ENCODE measurements at regions of chr6 and their contacts with region 1.

Region 1: GRCh38 chr6:133923938-133924593 is 29.0 kb upstream of the TBPL1 start:
- DNase-seq: peak; percentile 56 to 62 (median 57)
- H3K4me3 ChIP-seq: no peak overlapping the region
- H3K4me3 Mint-ChIP-seq: no peak overlapping the region
- H3K27ac ChIP-seq: no peak overlapping the region
- H3K27ac Mint-ChIP-seq: no peak overlapping the region
- H3K4me1 ChIP-seq: no peaks in the 10 kb centered on the region
- H3K4me1 Mint-ChIP-seq: no peaks in the 10 kb centered on the region
- H3K27me3 ChIP-seq: no peaks in the 10 kb centered on the region
- H3K27me3 Mint-ChIP-seq: peaks cover 15 to 21% of the 10 kb centered on the region in 2 donors

Region 2: DNA sequence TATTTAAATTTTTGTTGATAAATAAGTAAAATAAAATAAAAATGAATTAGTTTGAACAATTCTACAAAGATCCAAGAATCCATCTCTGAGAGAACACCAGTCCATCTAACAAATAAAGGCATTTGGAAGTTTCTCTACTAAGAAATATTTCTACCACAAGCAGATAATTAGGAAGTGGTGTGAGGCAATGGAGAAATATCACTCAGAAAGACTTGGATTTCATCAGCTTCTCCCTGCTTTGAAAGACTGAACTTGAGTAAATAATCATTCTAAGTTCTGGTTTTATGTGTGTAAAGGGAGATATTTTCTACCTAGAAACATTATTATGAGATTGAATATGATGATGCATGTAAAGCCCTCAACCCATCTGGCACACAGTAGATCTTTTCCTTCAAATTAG is 52.9 kb before region 1 on chr6:
- CTCF ChIA-PET with region 1: no interaction called
- POLR2A ChIA-PET with region 1: no interaction called
- intact Hi-C with region 1: no loop called
- DNase-seq: no peak
- H3K4me3 ChIP-seq: no peak overlapping the region
- H3K4me3 Mint-ChIP-seq: no peak overlapping the region
- H3K27ac ChIP-seq: no peak overlapping the region
- H3K27ac Mint-ChIP-seq: no peak overlapping the region
- H3K4me1 ChIP-seq: no peaks in the 10 kb centered on the region
- H3K4me1 Mint-ChIP-seq: no peaks in the 10 kb centered on the region
- H3K27me3 ChIP-seq: no peaks in the 10 kb centered on the region
- H3K27me3 Mint-ChIP-seq: peaks cover 9 to 22% of the 10 kb centered on the region in 2 donors

Region 3: GRCh38 chr6:133937909-133938308 is 13.8 kb after region 1 on chr6:
- CTCF ChIA-PET with region 1: interaction called, 13 read pairs
- POLR2A ChIA-PET with region 1: no interaction called
- intact Hi-C with region 1: no loop called
- DNase-seq: no peak
- H3K4me3 ChIP-seq: no peak overlapping the region
- H3K4me3 Mint-ChIP-seq: no peak overlapping the region
- H3K27ac ChIP-seq: no peak overlapping the region
- H3K27ac Mint-ChIP-seq: no peak overlapping the region
- H3K4me1 ChIP-seq: no peaks in the 10 kb centered on the region
- H3K4me1 Mint-ChIP-seq: peaks cover 0 to 4% (median 2%) of the 10 kb centered on the region in 4 donors
- H3K27me3 ChIP-seq: no peaks in the 10 kb centered on the region
- H3K27me3 Mint-ChIP-seq: peaks cover 10 to 24% of the 10 kb centered on the region in 2 donors

Region 4: DNA sequence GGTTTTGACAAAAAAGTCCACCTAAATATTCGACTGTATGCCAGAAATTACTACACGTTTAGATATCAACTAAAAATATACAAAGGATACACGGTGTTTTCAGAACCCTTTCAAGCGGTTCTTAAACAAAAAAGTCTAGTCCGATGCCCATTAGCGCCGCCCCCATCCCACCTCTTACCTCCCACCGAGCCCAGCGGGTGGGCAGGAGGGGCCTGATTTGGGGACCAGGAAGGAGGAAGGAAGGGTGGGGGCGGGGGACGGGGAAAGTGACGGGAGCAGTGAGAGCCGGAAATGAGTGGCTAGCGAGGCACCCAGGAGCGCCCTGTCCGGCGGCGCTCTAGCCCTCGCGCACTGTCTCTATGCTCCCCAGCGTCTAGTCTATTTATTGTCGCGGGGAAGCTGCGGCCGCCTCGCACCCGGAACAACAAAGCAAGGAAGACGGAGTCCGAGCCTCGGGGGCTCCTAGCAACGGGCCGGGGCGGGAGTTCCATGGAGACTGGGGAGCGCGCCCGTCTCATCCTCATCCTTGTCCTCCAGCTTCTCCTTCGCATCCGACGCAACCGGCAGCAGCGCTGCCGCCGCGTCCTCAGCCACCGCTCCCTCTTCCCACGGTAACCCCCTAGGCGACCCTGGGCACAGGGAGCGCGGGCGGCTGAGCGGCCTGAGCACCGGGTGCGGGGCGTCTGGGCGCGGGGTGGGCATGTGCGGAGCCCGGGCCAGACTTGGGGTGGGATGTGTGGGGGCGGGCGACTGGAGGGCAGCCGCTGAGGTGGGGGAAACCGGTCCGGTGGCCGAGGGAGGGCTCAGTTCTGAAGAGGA is 29.0 kb after region 1 on chr6 and contains the start of gene TBPL1:
- CTCF ChIA-PET with region 1: interaction called, 9 read pairs
- POLR2A ChIA-PET with region 1: interaction called, 8 read pairs
- intact Hi-C with region 1: loop called (anchors 1 kb)
- DNase-seq: peak; percentile 83 to 92 (median 84)
- H3K4me3 ChIP-seq: peak within 1 kb of the TSS; percentile 85 to 97
- H3K4me3 Mint-ChIP-seq: peak within 1 kb of the TSS; percentile 89 to 99 (median 97)
- H3K27ac ChIP-seq: peak within 1 kb of the TSS; percentile 65
- H3K27ac Mint-ChIP-seq: peak within 1 kb of the TSS; percentile 92 to 98 (median 96)
- H3K4me1 ChIP-seq: peaks cover 50% of the 10 kb centered on the region
- H3K4me1 Mint-ChIP-seq: peaks cover 37 to 55% (median 42%) of the 10 kb centered on the region in 4 donors
- H3K27me3 ChIP-seq: no peaks in the 10 kb centered on the region
- H3K27me3 Mint-ChIP-seq: no peaks in the 10 kb centered on the region
- total RNA-seq, gene TBPL1: 34.8 to 39.2 TPM

Region 5: DNA sequence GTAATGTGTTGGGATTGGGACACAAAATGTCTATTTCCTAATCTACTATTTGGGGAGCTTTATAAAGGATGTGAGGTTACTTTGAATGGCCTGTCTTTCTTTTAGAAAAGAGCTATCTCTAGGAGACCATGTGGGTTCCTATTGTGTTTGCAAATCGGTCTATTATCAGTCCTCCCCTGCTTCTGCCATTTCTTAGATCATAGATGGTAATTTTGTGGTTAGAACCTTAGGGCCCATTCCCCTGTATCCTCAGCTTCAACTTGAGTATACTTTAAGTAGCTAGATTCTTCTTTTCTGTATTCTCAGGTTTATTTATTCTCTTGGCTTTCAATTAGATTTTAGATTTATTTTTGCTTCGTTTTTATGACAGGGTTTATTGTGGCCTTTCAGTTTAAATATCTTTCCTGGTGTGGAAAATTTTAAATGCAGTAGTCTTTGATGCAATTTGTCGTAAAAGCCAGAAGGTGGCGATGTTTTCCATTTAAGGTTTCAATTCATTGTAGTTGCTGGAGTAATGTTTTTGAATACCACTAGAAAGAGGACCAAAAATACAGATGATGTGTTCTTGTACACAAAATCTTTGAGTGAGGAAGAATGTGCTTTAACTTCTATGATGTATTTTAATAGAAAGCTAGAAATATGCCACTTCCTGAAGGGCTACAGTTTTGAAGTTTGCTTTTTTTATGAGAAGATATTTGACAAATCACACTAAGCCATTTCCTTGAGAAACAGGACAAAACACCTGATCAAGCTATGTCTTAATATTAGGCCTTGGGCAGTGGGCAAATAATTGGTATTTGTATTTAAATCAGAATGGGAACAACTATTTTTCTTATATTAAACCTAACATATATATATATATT is 49.3 kb after region 1 on chr6:
- CTCF ChIA-PET with region 1: interaction called, 38 read pairs
- POLR2A ChIA-PET with region 1: interaction called, 3 read pairs
- intact Hi-C with region 1: loop called (anchors 1 kb)
- DNase-seq: peak in 4 of 5 donors; percentile 38 to 46 (median 42)
- H3K4me3 ChIP-seq: no peak overlapping the region
- H3K4me3 Mint-ChIP-seq: no peak overlapping the region
- H3K27ac ChIP-seq: no peak overlapping the region
- H3K27ac Mint-ChIP-seq: peak overlapping the region in 4 of 7 donors; percentile 11 to 66 (median 18)
- H3K4me1 ChIP-seq: peaks cover 37% of the 10 kb centered on the region
- H3K4me1 Mint-ChIP-seq: peaks cover 31 to 45% (median 38%) of the 10 kb centered on the region in 4 donors
- H3K27me3 ChIP-seq: no peaks in the 10 kb centered on the region
- H3K27me3 Mint-ChIP-seq: no peaks in the 10 kb centered on the region

Region 6: GRCh38 chr6:134058622-134059366 is 134.7 kb after region 1 on chr6:
- CTCF ChIA-PET with region 1: interaction called, 207 read pairs
- POLR2A ChIA-PET with region 1: no interaction called
- intact Hi-C with region 1: loop called (anchors 1 kb)
- DNase-seq: no peak
- H3K4me3 ChIP-seq: no peak overlapping the region
- H3K4me3 Mint-ChIP-seq: no peak overlapping the region
- H3K27ac ChIP-seq: no peak overlapping the region
- H3K27ac Mint-ChIP-seq: no peak overlapping the region
- H3K4me1 ChIP-seq: peaks cover 4% of the 10 kb centered on the region
- H3K4me1 Mint-ChIP-seq: peaks cover 0 to 2% (median under 1%) of the 10 kb centered on the region in 4 donors
- H3K27me3 ChIP-seq: no peaks in the 10 kb centered on the region
- H3K27me3 Mint-ChIP-seq: peaks cover 1 to 3% of the 10 kb centered on the region in 2 donors

Region 7: DNA sequence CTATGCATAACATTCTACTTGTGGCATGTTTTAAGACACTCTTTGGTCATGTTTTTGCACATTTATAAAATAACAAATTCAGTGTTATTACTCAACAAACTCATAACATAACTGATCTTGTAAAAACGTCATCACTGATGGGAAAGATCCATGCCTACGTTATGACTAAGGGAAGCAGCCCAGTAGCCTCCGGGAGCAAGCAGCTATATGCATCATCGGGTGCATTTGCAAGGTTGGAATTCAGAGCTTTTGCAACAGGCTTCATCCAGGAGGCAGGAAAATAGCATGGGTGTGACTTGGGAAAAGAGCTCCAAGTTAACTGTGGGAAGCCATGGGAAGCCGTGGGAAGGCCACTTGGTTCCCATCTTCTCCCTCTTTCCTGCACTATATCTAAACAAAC is 665.4 kb after region 1 on chr6:
- CTCF ChIA-PET with region 1: no interaction called
- POLR2A ChIA-PET with region 1: no interaction called
- intact Hi-C with region 1: no loop called
- DNase-seq: no peak
- H3K4me3 ChIP-seq: no peak overlapping the region
- H3K4me3 Mint-ChIP-seq: no peak overlapping the region
- H3K27ac ChIP-seq: no peak overlapping the region
- H3K27ac Mint-ChIP-seq: no peak overlapping the region
- H3K4me1 ChIP-seq: no peaks in the 10 kb centered on the region
- H3K4me1 Mint-ChIP-seq: peaks cover 0 to 4% (median 0%) of the 10 kb centered on the region in 4 donors
- H3K27me3 ChIP-seq: no peaks in the 10 kb centered on the region
- H3K27me3 Mint-ChIP-seq: no peaks in the 10 kb centered on the region

Measured in CD4-positive, alpha-beta memory T cell (primary cell).